CD4-positive, alpha-beta memory T cell (primary cell): ENCODE measurements at regions of chr9 and their contacts with region 1.

Region 1: GRCh38 chr9:137034863-137035761 is 3.2 kb upstream of the FUT7 start:
- DNase-seq: peak; percentile 85 to 87 (median 85)
- H3K4me3 ChIP-seq: peak overlapping the region; percentile 34 to 42
- H3K4me3 Mint-ChIP-seq: peak overlapping the region; percentile 73 to 85 (median 80)
- H3K27ac ChIP-seq: peak overlapping the region; percentile 60
- H3K27ac Mint-ChIP-seq: peak overlapping the region; percentile 69 to 91 (median 84)
- H3K4me1 ChIP-seq: peaks cover 50% of the 10 kb centered on the region
- H3K4me1 Mint-ChIP-seq: peaks cover 20 to 46% (median 33%) of the 10 kb centered on the region in 4 donors
- H3K27me3 ChIP-seq: no peaks in the 10 kb centered on the region
- H3K27me3 Mint-ChIP-seq: no peaks in the 10 kb centered on the region

Region 2: GRCh38 chr9:136807281-136808074 is 227.6 kb before region 1 on chr9 and contains the start of gene RABL6:
- CTCF ChIA-PET with region 1: interaction called, 11 read pairs
- POLR2A ChIA-PET with region 1: interaction called, 17 read pairs
- intact Hi-C with region 1: no loop called
- DNase-seq: peak; percentile 78 to 90 (median 86)
- H3K4me3 ChIP-seq: peak within 1 kb of the TSS; percentile 61 to 74
- H3K4me3 Mint-ChIP-seq: peak within 1 kb of the TSS; percentile 87 to 93 (median 90)
- H3K27ac ChIP-seq: peak within 1 kb of the TSS; percentile 83
- H3K27ac Mint-ChIP-seq: peak within 1 kb of the TSS; percentile 91 to 96 (median 94)
- H3K4me1 ChIP-seq: peaks cover 40% of the 10 kb centered on the region
- H3K4me1 Mint-ChIP-seq: peaks cover 11 to 45% (median 30%) of the 10 kb centered on the region in 4 donors
- H3K27me3 ChIP-seq: no peaks in the 10 kb centered on the region
- H3K27me3 Mint-ChIP-seq: no peaks in the 10 kb centered on the region
- total RNA-seq, gene RABL6: 65.1 to 70.9 TPM

Region 3: DNA sequence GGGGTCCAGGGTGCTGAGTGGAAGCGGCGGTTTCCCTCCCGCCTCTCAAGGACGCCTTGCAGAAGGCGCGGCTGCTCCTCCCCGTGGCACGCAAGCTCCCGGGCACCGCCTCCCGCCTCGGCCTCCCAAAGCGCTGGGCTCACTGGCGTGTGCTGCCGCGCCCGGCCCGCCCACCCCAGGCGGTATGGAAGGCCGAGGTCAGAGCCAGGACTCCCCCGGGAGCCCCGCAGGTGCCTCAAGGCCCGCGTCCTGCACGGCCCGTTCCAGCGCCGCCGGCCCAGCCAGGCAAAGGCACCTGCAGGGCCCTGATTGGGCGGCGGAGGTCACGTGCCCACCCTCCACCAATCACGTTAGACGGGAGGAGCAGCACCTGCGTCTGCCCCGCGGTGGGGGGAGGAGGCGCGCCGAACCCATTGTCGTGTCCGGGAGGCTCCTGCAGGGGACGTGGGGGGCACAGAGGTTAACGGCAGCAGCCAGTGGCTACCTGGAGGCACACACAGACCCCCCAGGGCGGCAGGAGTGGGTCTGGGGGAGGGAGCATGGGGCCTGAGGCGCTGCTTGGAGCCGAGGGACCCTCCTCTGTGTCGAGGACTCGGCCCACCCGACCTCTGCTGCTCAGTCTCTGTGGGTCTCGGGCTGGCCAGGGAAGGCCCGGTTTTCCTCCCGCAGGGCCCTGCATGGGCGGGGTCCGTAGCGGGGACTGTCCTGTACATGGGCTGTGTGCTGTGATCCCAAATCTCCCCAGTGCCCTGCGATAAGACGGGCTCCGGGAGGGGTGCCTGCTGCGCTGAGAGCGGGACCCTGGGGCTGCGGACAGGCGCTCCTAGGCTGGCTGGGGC is 85.1 kb before region 1 on chr9:
- CTCF ChIA-PET with region 1: interaction called, 84 read pairs
- POLR2A ChIA-PET with region 1: interaction called, 25 read pairs
- intact Hi-C with region 1: loop called (anchors 1 kb)
- DNase-seq: peak; percentile 93 to 97 (median 95)
- H3K4me3 ChIP-seq: peak overlapping the region; percentile 29 to 57
- H3K4me3 Mint-ChIP-seq: peak overlapping the region; percentile 79 to 90 (median 86)
- H3K27ac ChIP-seq: peak overlapping the region; percentile 82
- H3K27ac Mint-ChIP-seq: peak overlapping the region; percentile 72 to 91 (median 89)
- H3K4me1 ChIP-seq: peaks cover 16% of the 10 kb centered on the region
- H3K4me1 Mint-ChIP-seq: peaks cover 3 to 16% (median 8%) of the 10 kb centered on the region in 4 donors
- H3K27me3 ChIP-seq: no peaks in the 10 kb centered on the region
- H3K27me3 Mint-ChIP-seq: no peaks in the 10 kb centered on the region

Region 4: GRCh38 chr9:137000177-137000883 is 34.8 kb before region 1 on chr9:
- CTCF ChIA-PET with region 1: interaction called, 22 read pairs
- POLR2A ChIA-PET with region 1: interaction called, 9 read pairs
- intact Hi-C with region 1: no loop called
- DNase-seq: peak in 4 of 5 donors; percentile 40 to 53 (median 44)
- H3K4me3 ChIP-seq: no peak overlapping the region
- H3K4me3 Mint-ChIP-seq: peak overlapping the region in 7 of 8 donors; percentile 26 to 81 (median 60)
- H3K27ac ChIP-seq: no peak overlapping the region
- H3K27ac Mint-ChIP-seq: peak overlapping the region; percentile 65 to 92 (median 86)
- H3K4me1 ChIP-seq: peaks cover 45% of the 10 kb centered on the region
- H3K4me1 Mint-ChIP-seq: peaks cover 13 to 50% (median 25%) of the 10 kb centered on the region in 4 donors
- H3K27me3 ChIP-seq: no peaks in the 10 kb centered on the region
- H3K27me3 Mint-ChIP-seq: no peaks in the 10 kb centered on the region

Region 5: GRCh38 chr9:137064027-137064879 is 29.1 kb after region 1 on chr9:
- CTCF ChIA-PET with region 1: interaction called, 30 read pairs
- POLR2A ChIA-PET with region 1: interaction called, 6 read pairs
- intact Hi-C with region 1: no loop called
- DNase-seq: peak in 3 of 5 donors; percentile 34 to 56 (median 40)
- H3K4me3 ChIP-seq: no peak overlapping the region
- H3K4me3 Mint-ChIP-seq: no peak overlapping the region
- H3K27ac ChIP-seq: no peak overlapping the region
- H3K27ac Mint-ChIP-seq: peak overlapping the region in 2 of 7 donors; percentile 41 to 53
- H3K4me1 ChIP-seq: peaks cover 11% of the 10 kb centered on the region
- H3K4me1 Mint-ChIP-seq: peaks cover 4 to 10% (median 7%) of the 10 kb centered on the region in 4 donors
- H3K27me3 ChIP-seq: no peaks in the 10 kb centered on the region
- H3K27me3 Mint-ChIP-seq: peaks cover 0 to 4% of the 10 kb centered on the region in 2 donors

Region 6: GRCh38 chr9:137168905-137169856 is 134.1 kb after region 1 on chr9:
- CTCF ChIA-PET with region 1: no interaction called
- POLR2A ChIA-PET with region 1: no interaction called
- intact Hi-C with region 1: no loop called
- DNase-seq: no peak
- H3K4me3 ChIP-seq: peak overlapping the region in 1 of 2 donors; percentile 14
- H3K4me3 Mint-ChIP-seq: peak overlapping the region in 6 of 8 donors; percentile 43 to 79 (median 62)
- H3K27ac ChIP-seq: no peak overlapping the region
- H3K27ac Mint-ChIP-seq: no peak overlapping the region
- H3K4me1 ChIP-seq: no peaks in the 10 kb centered on the region
- H3K4me1 Mint-ChIP-seq: peaks cover 0 to 6% (median 3%) of the 10 kb centered on the region in 4 donors
- H3K27me3 ChIP-seq: peaks cover 33% of the 10 kb centered on the region
- H3K27me3 Mint-ChIP-seq: peaks cover 14 to 16% of the 10 kb centered on the region in 2 donors

Region 7: GRCh38 chr9:137851516-137852249 is 816.6 kb after region 1 on chr9:
- CTCF ChIA-PET with region 1: no interaction called
- POLR2A ChIA-PET with region 1: no interaction called
- intact Hi-C with region 1: no loop called
- DNase-seq: no peak
- H3K4me3 ChIP-seq: no peak overlapping the region
- H3K4me3 Mint-ChIP-seq: no peak overlapping the region
- H3K27ac ChIP-seq: no peak overlapping the region
- H3K27ac Mint-ChIP-seq: peak overlapping the region in 1 of 7 donors; percentile 15
- H3K4me1 ChIP-seq: no peaks in the 10 kb centered on the region
- H3K4me1 Mint-ChIP-seq: peaks cover 0 to 2% (median 0%) of the 10 kb centered on the region in 4 donors
- H3K27me3 ChIP-seq: no peaks in the 10 kb centered on the region
- H3K27me3 Mint-ChIP-seq: peaks cover 0 to 3% of the 10 kb centered on the region in 2 donors